Sigmoid colon (tissue), 7 donors: ENCODE measurements at regions of chr17 and their contacts with region 1.

Region 1: GRCh38 chr17:40909351-40909750 is 24.3 kb upstream of the KRT20 start:
- DNase-seq: peak; percentile 89
- H3K4me3 ChIP-seq: no peak overlapping the region
- H3K27ac ChIP-seq: peak overlapping the region in 3 of 4 donors; percentile 25 to 72 (median 47)
- H3K4me1 ChIP-seq: peaks cover 0 to 17% (median 15%) of the 10 kb centered on the region in 4 donors
- H3K27me3 ChIP-seq: peaks cover 0 to 9% (median 0%) of the 10 kb centered on the region in 3 donors
- CTCF ChIP-seq: peak; percentile 53 to 74 (median 62)
- EP300 ChIP-seq: no peak
- POLR2A ChIP-seq: no peak

Region 2: GRCh38 chr17:40779181-40779909 is 130.0 kb before region 1 on chr17:
- intact Hi-C with region 1: no loop called
- DNase-seq: no peak
- H3K4me3 ChIP-seq: no peak overlapping the region
- H3K27ac ChIP-seq: no peak overlapping the region
- H3K4me1 ChIP-seq: peaks cover 0 to 5% (median 0%) of the 10 kb centered on the region in 4 donors
- H3K27me3 ChIP-seq: peaks cover 3 to 35% (median 7%) of the 10 kb centered on the region in 3 donors
- CTCF ChIP-seq: no peak
- EP300 ChIP-seq: no peak
- POLR2A ChIP-seq: no peak

Region 3: GRCh38 chr17:40873255-40873654 is 36.1 kb before region 1 on chr17:
- intact Hi-C with region 1: no loop called
- DNase-seq: no peak
- H3K4me3 ChIP-seq: no peak overlapping the region
- H3K27ac ChIP-seq: no peak overlapping the region
- H3K4me1 ChIP-seq: no peaks in the 10 kb centered on the region
- H3K27me3 ChIP-seq: no peaks in the 10 kb centered on the region
- CTCF ChIP-seq: no peak
- EP300 ChIP-seq: no peak
- POLR2A ChIP-seq: no peak

Region 4: DNA sequence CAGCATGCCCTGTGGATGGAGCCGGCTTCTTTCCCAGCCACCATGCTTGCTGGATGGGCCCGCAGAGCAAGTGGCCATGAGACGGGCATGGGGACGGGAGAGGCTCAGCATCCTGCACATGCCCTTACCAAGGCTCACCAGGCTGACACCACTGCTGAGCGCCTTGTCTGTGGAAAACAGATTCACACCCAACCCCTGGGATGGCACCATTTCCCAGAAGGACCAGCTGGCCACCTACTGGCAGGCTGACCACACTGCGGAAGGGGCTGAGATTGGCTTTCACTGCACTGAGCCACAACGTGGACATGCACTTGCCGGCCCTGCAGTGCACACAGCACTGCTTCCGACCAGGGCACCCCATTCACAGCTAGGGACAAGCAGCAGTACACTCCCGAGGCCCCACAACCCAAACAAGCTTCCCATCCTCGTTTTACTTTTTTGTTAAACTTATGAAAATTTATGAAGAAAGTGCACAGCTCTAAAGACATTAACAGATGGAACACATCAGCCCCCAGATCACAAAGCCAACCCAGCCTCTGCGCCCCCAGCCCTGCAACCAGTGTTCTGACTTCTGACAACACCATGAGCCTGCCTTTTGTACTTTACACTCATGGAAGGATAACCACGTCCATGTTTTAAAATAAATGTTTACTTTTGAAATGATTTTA is 420.1 kb after region 1 on chr17:
- intact Hi-C with region 1: loop called (anchors 5 kb)
- DNase-seq: no peak
- H3K4me3 ChIP-seq: no peak overlapping the region
- H3K27ac ChIP-seq: no peak overlapping the region
- H3K4me1 ChIP-seq: no peaks in the 10 kb centered on the region
- H3K27me3 ChIP-seq: no peaks in the 10 kb centered on the region
- CTCF ChIP-seq: peak in 1 of 4 experiments; percentile 34
- EP300 ChIP-seq: no peak
- POLR2A ChIP-seq: no peak

Region 5: DNA sequence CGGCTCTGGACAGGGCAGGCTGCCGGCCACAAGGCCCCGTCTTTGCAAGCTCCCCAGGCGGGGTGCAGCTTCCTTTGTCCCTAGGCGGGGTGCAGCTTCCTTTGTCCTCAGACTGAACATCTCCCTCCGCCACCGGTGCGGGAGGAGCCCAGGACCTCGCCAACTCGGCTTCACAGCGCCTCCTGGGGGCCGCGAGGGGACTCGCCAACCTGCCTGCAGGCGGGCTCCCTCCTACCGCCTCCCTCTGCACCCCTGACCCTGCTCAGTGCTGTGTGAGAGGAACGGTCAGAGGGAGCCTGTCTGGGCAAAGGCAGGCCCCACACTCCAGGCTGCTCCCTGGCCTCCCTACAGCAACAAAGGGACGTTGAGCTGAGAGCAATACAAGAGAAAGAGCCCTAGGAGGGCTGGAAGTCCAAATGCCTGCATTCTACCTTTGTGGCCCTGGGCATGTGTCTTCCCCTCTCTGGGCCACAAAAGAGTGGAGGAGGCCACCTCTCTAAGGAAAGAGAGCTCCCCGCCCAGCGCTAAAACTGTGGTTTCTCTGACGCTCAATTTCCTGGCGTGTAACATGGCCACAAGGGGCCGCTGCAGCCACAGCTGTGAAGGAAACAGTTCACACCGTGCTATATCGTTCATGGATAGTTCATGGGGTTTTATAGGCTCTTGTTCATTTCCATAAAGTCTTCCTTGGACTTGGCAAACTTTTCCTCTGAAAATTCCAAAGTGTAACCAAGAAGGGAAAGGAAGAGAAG is 639.7 kb after region 1 on chr17:
- intact Hi-C with region 1: loop called (anchors 1 kb)
- DNase-seq: peak; percentile 85
- H3K4me3 ChIP-seq: peak overlapping the region in 3 of 4 donors; percentile 5 to 33 (median 30)
- H3K27ac ChIP-seq: peak overlapping the region in 3 of 4 donors; percentile 54 to 65 (median 56)
- H3K4me1 ChIP-seq: peaks cover 0 to 30% (median 23%) of the 10 kb centered on the region in 4 donors
- H3K27me3 ChIP-seq: no peaks in the 10 kb centered on the region
- CTCF ChIP-seq: peak; percentile 59 to 91 (median 81)
- EP300 ChIP-seq: no peak
- POLR2A ChIP-seq: no peak

Region 6: DNA sequence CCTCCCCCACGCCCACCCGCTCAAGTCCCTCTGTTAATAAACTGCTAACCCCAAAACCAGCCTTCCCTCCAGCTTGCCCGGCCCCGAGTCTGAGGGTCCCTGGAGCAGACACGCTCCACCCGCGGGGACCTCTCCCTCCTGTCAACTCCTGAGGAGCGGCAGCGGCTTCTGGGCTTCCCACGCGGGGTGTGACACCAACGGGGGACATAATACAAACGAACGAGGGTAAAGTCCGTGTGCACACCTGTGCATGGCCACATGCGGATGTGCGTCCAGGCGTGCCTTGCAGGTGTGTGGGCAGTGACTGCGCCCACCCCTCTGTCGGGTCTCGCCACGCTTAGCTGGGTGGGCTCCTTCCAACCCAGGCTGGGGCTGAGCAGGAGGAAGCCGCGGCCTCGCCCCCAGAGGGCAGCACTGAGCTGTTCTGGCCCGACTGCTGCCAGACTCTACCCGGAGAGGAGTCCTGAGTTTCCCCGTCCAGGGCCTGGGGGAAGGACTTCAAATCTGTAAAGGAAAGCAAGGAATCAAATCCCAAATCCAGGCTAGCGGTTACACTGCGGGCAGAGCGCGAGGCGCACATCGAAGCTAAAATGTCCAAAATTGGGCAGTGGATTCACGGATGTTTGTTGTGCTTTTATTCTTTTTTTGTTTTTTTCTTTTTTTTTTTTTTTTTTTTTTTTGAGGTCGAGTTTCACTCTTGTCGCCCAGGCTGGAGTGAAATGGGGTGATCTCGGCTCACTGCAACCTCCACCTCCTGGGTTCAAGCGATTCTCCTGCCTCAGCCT is 739.3 kb after region 1 on chr17:
- intact Hi-C with region 1: loop called (anchors 5 kb)
- DNase-seq: peak; percentile 92
- H3K4me3 ChIP-seq: peak overlapping the region; percentile 1 to 46 (median 36)
- H3K27ac ChIP-seq: peak overlapping the region; percentile 30 to 59 (median 49)
- H3K4me1 ChIP-seq: peaks cover 0 to 26% (median 14%) of the 10 kb centered on the region in 4 donors
- H3K27me3 ChIP-seq: no peaks in the 10 kb centered on the region
- CTCF ChIP-seq: peak; percentile 82 to 97 (median 92)
- EP300 ChIP-seq: no peak
- POLR2A ChIP-seq: no peak